ENCODE measurements at regions of chr6 and their contacts with region 1.

Region 1: DNA sequence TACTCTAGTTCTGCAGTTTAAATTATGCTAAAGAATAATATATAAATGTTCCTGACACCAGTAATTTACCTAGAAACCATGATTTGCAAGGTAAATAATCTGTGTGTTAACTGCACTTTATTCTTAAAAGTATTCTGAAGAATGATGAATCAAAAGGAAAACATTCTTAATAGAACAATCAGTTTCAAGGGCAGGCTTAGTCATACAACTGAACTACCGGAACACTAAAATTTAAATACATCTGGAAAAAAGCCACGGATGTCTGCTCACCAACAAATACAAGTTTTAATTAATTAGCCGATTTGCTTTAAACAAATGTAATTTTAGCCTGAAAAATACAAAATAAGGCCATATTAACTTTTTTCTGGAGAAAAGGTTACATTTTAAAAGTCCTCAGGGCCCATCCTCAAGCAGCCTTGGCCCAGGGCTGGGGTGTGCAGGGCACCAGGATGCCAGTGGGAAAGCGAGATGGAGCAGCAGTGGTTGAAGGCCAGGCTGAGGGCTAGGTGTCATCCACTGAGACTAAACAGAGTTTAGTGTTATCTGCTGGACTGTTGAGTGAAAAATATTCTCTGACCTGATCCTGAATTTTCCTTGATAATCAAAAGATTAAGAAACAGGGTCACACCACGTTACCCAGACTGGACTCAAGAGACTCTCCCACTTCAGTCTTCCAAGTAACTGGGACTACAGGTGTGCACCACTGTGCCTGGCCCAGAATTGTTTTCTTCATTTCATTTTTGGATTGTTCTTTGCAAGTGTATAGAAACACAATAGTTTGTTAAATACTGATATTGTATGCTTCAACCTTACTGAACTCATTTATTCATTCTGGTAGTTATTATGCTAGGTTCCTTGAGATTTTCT is 88.2 kb upstream of the DST start:
- DNase-seq: peak; percentile 85
- ATAC-seq: peak; percentile 65
- H3K4me3 ChIP-seq: peak overlapping the region; percentile 19; the same call in 1 of the 2 replicates
- H3K27ac ChIP-seq: peak overlapping the region; percentile 92
- H3K4me1 ChIP-seq: peaks cover 71% of the 10 kb centered on the region
- H3K27me3 ChIP-seq: no peaks in the 10 kb centered on the region
- CTCF ChIP-seq: no peak

Region 2: GRCh38 chr6:56652994-56653393 is 77.9 kb before region 1 on chr6:
- CTCF ChIA-PET with region 1: no interaction called
- POLR2A ChIA-PET with region 1: no interaction called
- intact Hi-C with region 1: no loop called
- DNase-seq: peak; percentile 90
- ATAC-seq: peak; percentile 91
- H3K4me3 ChIP-seq: peak overlapping the region; percentile 31; the same call in 1 of the 2 replicates
- H3K27ac ChIP-seq: peak overlapping the region; percentile 90
- H3K4me1 ChIP-seq: peaks cover 47% of the 10 kb centered on the region
- H3K27me3 ChIP-seq: no peaks in the 10 kb centered on the region
- CTCF ChIP-seq: no peak

Region 3: GRCh38 chr6:56714982-56715456 is 15.9 kb before region 1 on chr6:
- CTCF ChIA-PET with region 1: no interaction called
- POLR2A ChIA-PET with region 1: interaction called, 5 read pairs
- intact Hi-C with region 1: loop called (anchors 1 kb)
- DNase-seq: peak; percentile 94
- ATAC-seq: peak; percentile 86
- H3K4me3 ChIP-seq: peak overlapping the region; percentile 35; the same call in 1 of the 2 replicates
- H3K27ac ChIP-seq: peak overlapping the region; percentile 83
- H3K4me1 ChIP-seq: peaks cover 44% of the 10 kb centered on the region
- H3K27me3 ChIP-seq: no peaks in the 10 kb centered on the region
- CTCF ChIP-seq: no peak

Region 4: DNA sequence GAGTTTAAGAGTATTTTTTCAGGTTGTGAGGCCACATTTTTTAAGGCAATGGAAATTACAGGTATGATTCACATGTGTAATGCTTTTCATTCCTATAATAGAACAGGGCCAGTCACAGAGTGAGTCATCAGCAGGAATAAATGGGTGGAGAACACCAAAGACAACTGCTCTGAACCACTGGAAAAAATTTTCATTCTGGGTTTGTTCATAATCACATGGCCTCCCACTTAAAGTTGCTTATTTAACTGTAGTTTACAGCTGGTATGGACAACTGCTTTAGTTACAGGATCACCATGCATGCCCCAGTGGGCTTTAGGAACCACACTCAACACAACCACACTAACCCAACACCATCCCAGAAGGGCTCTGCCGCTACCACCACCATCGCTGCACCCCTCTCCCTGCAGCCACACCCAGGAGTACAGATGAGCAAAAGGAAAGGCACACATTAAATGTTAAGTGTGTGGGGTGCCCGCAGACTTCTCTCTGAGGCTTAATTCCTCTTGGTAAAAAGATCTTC is 18.8 kb after region 1 on chr6:
- CTCF ChIA-PET with region 1: no interaction called
- POLR2A ChIA-PET with region 1: no interaction called
- intact Hi-C with region 1: loop called (anchors 2 kb)
- DNase-seq: peak; percentile 91
- ATAC-seq: peak; percentile 95
- H3K4me3 ChIP-seq: peak overlapping the region; percentile 24; the same call in 1 of the 2 replicates
- H3K27ac ChIP-seq: peak overlapping the region; percentile 90
- H3K4me1 ChIP-seq: peaks cover 44% of the 10 kb centered on the region
- H3K27me3 ChIP-seq: no peaks in the 10 kb centered on the region
- CTCF ChIP-seq: no peak

Measured in PC-3 (cell line).